ENCODE measurements at regions of chr6 and their contacts with region 1.

Region 1: GRCh38 chr6:154733012-154733625 is at the start of gene SCAF8:
- DNase-seq: peak; percentile 69
- ATAC-seq: peak; percentile 80
- H3K4me3 ChIP-seq: peak within 1 kb of the TSS; percentile 87
- H3K27ac ChIP-seq: peak within 1 kb of the TSS; percentile 100
- H3K4me1 ChIP-seq: peaks cover 2% of the 10 kb centered on the region
- H3K27me3 ChIP-seq: no peaks in the 10 kb centered on the region
- CTCF ChIP-seq: peak; percentile 92
- POLR2A ChIP-seq: peak; percentile 76
- RAD21 ChIP-seq: peak; percentile 53
- total RNA-seq, gene SCAF8: 21.9 and 23.5 TPM in 2 replicates

Region 2: DNA sequence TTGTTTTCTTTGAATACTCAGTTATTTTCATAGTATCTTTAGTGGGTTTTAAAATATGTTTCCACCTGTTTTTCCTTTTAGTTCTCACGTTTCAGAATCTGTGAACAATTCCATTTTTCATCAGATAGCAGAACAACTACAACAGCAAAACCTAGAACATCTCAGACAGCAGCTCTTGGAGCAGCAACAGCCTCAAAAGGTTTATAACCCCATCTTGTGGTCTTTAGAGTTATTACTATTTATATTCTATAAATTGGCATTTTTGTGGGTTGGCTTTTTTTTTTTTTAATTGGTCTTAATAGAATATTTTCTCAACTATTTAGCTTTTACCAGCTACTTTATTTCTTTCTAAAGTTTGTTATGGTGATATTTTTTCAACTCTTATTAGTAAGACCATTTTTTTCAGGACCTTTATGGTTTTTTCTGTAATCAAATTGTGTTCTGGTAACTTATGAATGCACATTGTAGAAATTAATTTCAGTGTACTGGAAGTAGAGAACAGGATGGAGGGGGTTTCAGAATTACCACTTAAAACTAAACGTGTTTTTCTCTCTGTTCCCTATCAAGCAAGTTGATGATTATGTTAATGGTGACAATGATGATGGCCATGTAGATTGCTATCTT is 72.3 kb after region 1 on chr6:
- CTCF ChIA-PET with region 1: interaction called, 3 read pairs
- POLR2A ChIA-PET with region 1: interaction called, 4 read pairs
- dilution Hi-C with region 1: no loop called
- in situ Hi-C with region 1: no loop called
- intact Hi-C with region 1: loop called (anchors 1 kb)
- DNase-seq: peak; percentile 70
- ATAC-seq: peak; percentile 80
- H3K4me3 ChIP-seq: no peak overlapping the region
- H3K27ac ChIP-seq: no peak overlapping the region
- H3K4me1 ChIP-seq: no peaks in the 10 kb centered on the region
- H3K27me3 ChIP-seq: no peaks in the 10 kb centered on the region
- CTCF ChIP-seq: peak; percentile 69
- POLR2A ChIP-seq: no peak
- RAD21 ChIP-seq: peak; percentile 73

Measured in IMR-90 (cell line).